Activated CD8-positive, alpha-beta T cell treated with anti-CD3 and anti-CD28 coated beads for 36 hours (primary cell): ENCODE measurements at regions of chr10 and their contacts with region 1.

Region 1: GRCh38 chr10:3869036-3869435 is 84.0 kb upstream of the KLF6 start:
- DNase-seq: no peak
- ATAC-seq: peak; percentile 18
- H3K4me3 Mint-ChIP-seq: no peak overlapping the region
- H3K27ac Mint-ChIP-seq: peak overlapping the region; percentile 53
- H3K4me1 Mint-ChIP-seq: peaks cover 63% of the 10 kb centered on the region
- H3K27me3 Mint-ChIP-seq: no peaks in the 10 kb centered on the region
- CTCF ChIP-seq: no peak

Region 2: GRCh38 chr10:3858041-3858845 is 10.8 kb before region 1 on chr10:
- CTCF ChIA-PET with region 1: interaction called, 4 read pairs
- POLR2A ChIA-PET with region 1: interaction called, 16 read pairs
- intact Hi-C with region 1: no loop called
- DNase-seq: no peak
- ATAC-seq: no peak
- H3K4me3 Mint-ChIP-seq: no peak overlapping the region
- H3K27ac Mint-ChIP-seq: no peak overlapping the region
- H3K4me1 Mint-ChIP-seq: peaks cover 3% of the 10 kb centered on the region
- H3K27me3 Mint-ChIP-seq: no peaks in the 10 kb centered on the region
- CTCF ChIP-seq: no peak